Activated B cell treated with CpG ODN at 0.5 μM for 24 hours (primary cell): ENCODE measurements at regions of chr5 and their contacts with region 1.

Region 1: GRCh38 chr5:114744406-114744805 is 382.5 kb downstream of the KCNN2 start:
- DNase-seq: no peak
- ATAC-seq: no peak
- H3K4me3 Mint-ChIP-seq: no peak overlapping the region
- H3K27ac Mint-ChIP-seq: no peak overlapping the region
- H3K4me1 Mint-ChIP-seq: no peaks in the 10 kb centered on the region
- H3K27me3 Mint-ChIP-seq: no peaks in the 10 kb centered on the region
- CTCF ChIP-seq: no peak

Region 2: GRCh38 chr5:113538313-113538712 is 1206.1 kb before region 1 on chr5:
- CTCF ChIA-PET with region 1: no interaction called
- POLR2A ChIA-PET with region 1: no interaction called
- intact Hi-C with region 1: loop called (anchors 5 kb)
- DNase-seq: no peak
- ATAC-seq: no peak
- H3K4me3 Mint-ChIP-seq: no peak overlapping the region
- H3K27ac Mint-ChIP-seq: no peak overlapping the region
- H3K4me1 Mint-ChIP-seq: peaks cover 5% of the 10 kb centered on the region
- H3K27me3 Mint-ChIP-seq: no peaks in the 10 kb centered on the region
- CTCF ChIP-seq: no peak